ENCODE measurements at regions of chr12 and their contacts with region 1.

Region 1: DNA sequence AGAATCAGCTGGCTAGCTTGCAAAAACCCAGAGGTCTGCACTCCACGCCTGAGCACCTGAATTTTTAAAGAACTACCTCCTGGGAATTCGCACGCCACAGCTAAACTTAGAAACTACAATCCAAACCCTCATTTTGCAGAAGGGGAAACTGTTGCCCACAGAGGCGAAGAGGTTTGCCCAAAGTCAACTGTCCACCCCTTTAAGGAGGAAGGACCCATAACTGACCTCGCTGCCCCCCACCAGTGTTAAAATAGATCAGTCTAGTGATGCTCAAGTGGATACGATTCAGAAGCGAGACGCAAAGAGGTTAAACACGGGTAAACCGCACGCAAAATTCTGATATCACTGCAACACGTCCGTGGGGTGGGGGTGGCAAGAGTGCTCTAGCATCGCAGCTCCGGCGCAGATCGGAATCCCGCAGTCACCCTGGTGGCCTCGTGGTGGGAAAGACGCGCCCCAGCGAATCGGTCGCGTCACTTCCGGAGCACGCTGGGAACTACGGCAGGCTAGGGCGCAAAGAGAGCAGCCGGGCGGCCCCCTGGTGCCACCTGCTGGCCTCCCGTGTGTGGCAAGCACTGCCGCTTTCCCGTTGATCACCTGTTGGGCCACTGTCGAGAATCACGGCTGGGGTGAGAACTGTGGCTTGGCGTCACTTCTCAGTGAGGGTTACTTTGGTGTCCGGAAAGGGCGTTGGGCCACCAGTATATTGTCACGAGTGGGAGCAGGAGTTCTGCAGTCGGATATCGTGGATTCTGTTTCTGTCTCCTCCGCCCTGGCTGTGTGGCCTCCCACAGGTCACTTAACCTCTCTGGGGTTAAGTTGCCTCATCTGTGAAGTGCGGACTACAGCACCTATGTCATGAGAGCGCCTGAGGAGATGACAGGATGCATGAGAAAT is at the start of gene ALKBH2:
- DNase-seq: peak; percentile 97
- H3K4me3 Mint-ChIP-seq: peak within 1 kb of the TSS; percentile 71
- H3K27ac Mint-ChIP-seq: peak within 1 kb of the TSS; percentile 81
- H3K4me1 Mint-ChIP-seq: peaks cover 34% of the 10 kb centered on the region
- H3K27me3 Mint-ChIP-seq: no peaks in the 10 kb centered on the region
- total RNA-seq, gene ALKBH2: 23.9 to 28.6 TPM

Region 2: GRCh38 chr12:108633534-108634248 is 459.6 kb before region 1 on chr12 and contains the start of gene SELPLG:
- CTCF ChIA-PET with region 1: interaction called, 3 read pairs
- POLR2A ChIA-PET with region 1: no interaction called
- intact Hi-C with region 1: loop called (anchors 10 kb)
- DNase-seq: peak; percentile 93
- H3K4me3 Mint-ChIP-seq: peak within 1 kb of the TSS; percentile 97
- H3K27ac Mint-ChIP-seq: peak within 1 kb of the TSS; percentile 97
- H3K4me1 Mint-ChIP-seq: peaks cover 51% of the 10 kb centered on the region
- H3K27me3 Mint-ChIP-seq: no peaks in the 10 kb centered on the region
- total RNA-seq, gene SELPLG: 56.8 to 60.1 TPM

Region 3: DNA sequence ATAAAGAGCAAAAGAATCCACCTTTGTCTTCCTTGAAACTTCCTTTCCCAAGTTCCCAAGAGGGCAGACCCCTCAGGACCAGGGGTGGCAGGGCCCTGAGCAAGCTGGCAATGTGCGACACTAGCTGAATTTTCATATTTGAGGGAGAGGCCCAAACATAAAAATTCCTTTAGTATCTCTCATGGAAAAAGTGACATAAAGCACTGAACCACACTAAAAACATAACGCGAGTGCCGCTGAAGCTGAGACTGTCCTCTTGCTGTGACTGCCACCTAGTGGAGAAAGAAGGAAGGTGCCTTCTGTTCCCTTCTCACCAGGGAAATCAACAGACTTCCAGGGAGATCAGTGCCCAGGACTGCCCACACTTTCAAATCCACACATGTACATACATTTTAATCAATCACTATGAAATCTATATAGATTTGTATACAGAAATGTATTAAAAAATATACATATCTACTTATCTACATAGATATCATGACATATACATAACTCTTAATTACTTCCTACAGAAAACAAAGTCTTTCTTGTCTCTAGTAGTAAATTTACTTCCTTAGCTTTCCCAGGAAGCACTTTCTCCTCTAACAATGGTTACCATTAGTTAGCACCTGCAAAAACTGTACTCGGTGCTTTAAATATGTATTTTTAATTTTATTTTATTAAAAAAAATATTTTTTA is 289.7 kb before region 1 on chr12:
- CTCF ChIA-PET with region 1: interaction called, 6 read pairs
- POLR2A ChIA-PET with region 1: no interaction called
- intact Hi-C with region 1: loop called (anchors 5 kb)
- DNase-seq: peak; percentile 73
- H3K4me3 Mint-ChIP-seq: no peak overlapping the region
- H3K27ac Mint-ChIP-seq: peak overlapping the region; percentile 33
- H3K4me1 Mint-ChIP-seq: peaks cover 7% of the 10 kb centered on the region
- H3K27me3 Mint-ChIP-seq: no peaks in the 10 kb centered on the region

Region 4: GRCh38 chr12:108884116-108885012 is 208.9 kb before region 1 on chr12:
- CTCF ChIA-PET with region 1: interaction called, 39 read pairs
- POLR2A ChIA-PET with region 1: no interaction called
- intact Hi-C with region 1: loop called (anchors 1 kb)
- DNase-seq: peak; percentile 80
- H3K4me3 Mint-ChIP-seq: no peak overlapping the region
- H3K27ac Mint-ChIP-seq: no peak overlapping the region
- H3K4me1 Mint-ChIP-seq: peaks cover 2% of the 10 kb centered on the region
- H3K27me3 Mint-ChIP-seq: no peaks in the 10 kb centered on the region

Region 5: GRCh38 chr12:109110988-109111495 is 17.8 kb after region 1 on chr12:
- CTCF ChIA-PET with region 1: interaction called, 49 read pairs
- POLR2A ChIA-PET with region 1: interaction called, 3 read pairs
- intact Hi-C with region 1: no loop called
- DNase-seq: peak; percentile 67
- H3K4me3 Mint-ChIP-seq: peak overlapping the region; percentile 64
- H3K27ac Mint-ChIP-seq: peak overlapping the region; percentile 40
- H3K4me1 Mint-ChIP-seq: peaks cover 14% of the 10 kb centered on the region
- H3K27me3 Mint-ChIP-seq: no peaks in the 10 kb centered on the region

Region 6: GRCh38 chr12:109134186-109134917 is 41.1 kb after region 1 on chr12:
- CTCF ChIA-PET with region 1: no interaction called
- POLR2A ChIA-PET with region 1: no interaction called
- intact Hi-C with region 1: no loop called
- DNase-seq: no peak
- H3K4me3 Mint-ChIP-seq: no peak overlapping the region
- H3K27ac Mint-ChIP-seq: no peak overlapping the region
- H3K4me1 Mint-ChIP-seq: no peaks in the 10 kb centered on the region
- H3K27me3 Mint-ChIP-seq: no peaks in the 10 kb centered on the region

Region 7: GRCh38 chr12:109165599-109165998 is 72.3 kb after region 1 on chr12:
- CTCF ChIA-PET with region 1: no interaction called
- POLR2A ChIA-PET with region 1: no interaction called
- intact Hi-C with region 1: no loop called
- DNase-seq: no peak
- H3K4me3 Mint-ChIP-seq: no peak overlapping the region
- H3K27ac Mint-ChIP-seq: no peak overlapping the region
- H3K4me1 Mint-ChIP-seq: no peaks in the 10 kb centered on the region
- H3K27me3 Mint-ChIP-seq: no peaks in the 10 kb centered on the region

Region 8: GRCh38 chr12:109449845-109450532 is 356.7 kb after region 1 on chr12:
- CTCF ChIA-PET with region 1: no interaction called
- POLR2A ChIA-PET with region 1: no interaction called
- intact Hi-C with region 1: no loop called
- DNase-seq: no peak
- H3K4me3 Mint-ChIP-seq: no peak overlapping the region
- H3K27ac Mint-ChIP-seq: no peak overlapping the region
- H3K4me1 Mint-ChIP-seq: no peaks in the 10 kb centered on the region
- H3K27me3 Mint-ChIP-seq: no peaks in the 10 kb centered on the region

Measured in activated CD4-positive, alpha-beta memory T cell treated with anti-CD3 and anti-CD28 coated beads for 36 hours (primary cell).